OCI-LY7 (cell line): ENCODE measurements at regions of chr1 and their contacts with region 1.

Region 1: DNA sequence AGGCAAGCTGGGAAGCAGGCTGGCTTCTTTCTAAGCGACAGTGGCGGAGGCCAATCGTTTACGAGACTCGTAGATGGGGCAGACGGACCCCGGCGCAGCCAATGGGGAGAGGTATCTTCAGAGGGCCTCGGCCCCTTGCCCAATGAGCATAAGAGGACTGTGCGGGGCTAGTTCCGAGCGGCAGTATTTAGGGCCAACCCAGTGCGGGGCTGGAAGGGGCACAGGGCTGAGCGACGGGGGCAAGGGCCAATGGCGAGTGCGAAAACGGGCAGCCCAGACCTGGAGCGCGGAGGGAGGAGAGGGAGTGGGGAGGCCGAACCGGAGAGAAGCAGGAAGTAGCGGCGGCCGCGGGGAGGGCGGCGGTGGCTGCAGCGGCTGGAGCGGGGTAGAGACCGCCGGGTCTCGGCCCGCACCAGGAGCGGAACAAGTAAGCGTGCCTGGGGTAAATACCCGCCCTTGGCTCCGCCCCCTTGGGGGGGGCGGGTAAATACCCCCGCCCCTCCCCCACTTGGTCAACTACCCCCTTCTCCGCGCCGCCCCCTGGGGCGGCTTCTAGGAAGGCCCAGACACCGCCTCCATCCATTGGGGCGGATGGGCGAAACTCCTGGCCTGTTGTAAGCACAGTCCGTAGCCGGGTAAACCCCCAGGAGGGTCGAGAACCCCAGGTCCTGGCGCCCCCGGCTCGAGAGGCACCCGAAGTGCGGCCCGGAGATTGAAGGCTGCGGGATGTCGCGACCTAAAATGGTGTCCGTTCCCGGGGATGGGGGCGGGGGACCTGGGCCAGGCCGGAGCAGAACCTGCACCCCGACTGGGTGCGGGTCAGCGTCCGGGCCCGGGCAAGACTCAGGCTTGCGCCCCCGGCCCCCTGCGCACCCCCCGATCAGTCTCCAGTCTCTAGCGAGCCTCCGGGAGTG is at the start of gene ZNF687:
- DNase-seq: peak; percentile 100
- H3K4me3 ChIP-seq: peak within 1 kb of the TSS; percentile 80
- H3K27ac ChIP-seq: peak within 1 kb of the TSS; percentile 91
- H3K4me1 ChIP-seq: peaks cover 27% of the 10 kb centered on the region
- CTCF ChIP-seq: no peak
- total RNA-seq, gene ZNF687: 18.0 and 20.9 TPM in 2 replicates

Region 2: GRCh38 chr1:151198255-151199127 is 83.7 kb before region 1 on chr1 and contains the start of gene PIP5K1A:
- CTCF ChIA-PET with region 1: no interaction called
- POLR2A ChIA-PET with region 1: interaction called, 3 read pairs
- intact Hi-C with region 1: loop called (anchors 1 kb)
- DNase-seq: peak; percentile 99
- H3K4me3 ChIP-seq: peak within 1 kb of the TSS; percentile 98
- H3K27ac ChIP-seq: peak within 1 kb of the TSS; percentile 66
- H3K4me1 ChIP-seq: peaks cover 35% of the 10 kb centered on the region
- CTCF ChIP-seq: no peak
- total RNA-seq, gene PIP5K1A: 42.9 and 50.5 TPM in 2 replicates

Region 3: DNA sequence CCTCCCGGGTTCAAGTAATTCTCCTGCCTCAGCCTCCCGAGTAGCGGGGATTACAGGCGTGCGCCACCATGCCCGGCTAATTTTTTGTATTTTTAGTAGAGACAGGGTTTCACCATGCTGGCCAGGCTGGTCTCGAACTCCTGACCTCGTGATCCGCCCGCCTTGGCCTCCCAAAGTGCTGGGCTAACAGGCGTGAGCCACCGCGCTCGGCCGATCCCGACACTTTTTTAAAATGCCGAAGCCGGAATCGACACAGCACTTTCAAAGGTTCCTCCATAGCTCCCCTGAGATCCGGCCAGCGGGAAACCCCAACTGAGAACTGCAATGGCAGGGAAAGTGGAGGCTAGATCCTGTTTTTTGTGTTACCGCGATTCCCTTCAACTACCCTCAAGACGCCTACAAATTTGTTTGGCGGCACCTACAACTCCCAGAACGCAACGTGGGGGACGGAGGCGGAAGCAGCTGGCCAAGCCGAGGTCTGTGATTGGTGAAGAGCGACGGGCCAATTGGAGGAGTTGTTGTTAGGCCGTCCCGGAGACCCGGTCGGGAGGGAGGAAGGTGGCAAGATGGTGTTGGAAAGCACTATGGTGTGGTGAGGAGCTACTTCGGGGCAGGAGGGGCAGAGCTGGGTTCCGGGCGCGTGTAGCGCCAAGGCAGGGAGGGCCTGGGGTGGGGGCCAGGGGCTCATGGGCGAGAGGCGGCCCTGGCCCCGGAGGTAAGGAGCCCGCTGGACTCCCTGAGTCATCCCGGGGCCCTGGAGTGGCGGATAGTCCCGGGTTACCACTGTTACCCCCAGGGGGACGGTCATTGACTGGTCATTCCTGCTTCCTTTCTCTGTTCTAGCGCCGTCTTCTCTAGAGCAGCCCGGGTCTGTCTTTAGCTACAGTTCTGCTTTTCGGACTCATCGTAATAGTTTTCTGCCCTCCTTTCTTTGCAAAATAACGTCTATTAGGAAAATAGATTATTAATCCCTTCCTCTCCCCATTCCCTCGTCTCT is 27.7 kb before region 1 on chr1 and contains the start of gene PSMD4:
- CTCF ChIA-PET with region 1: no interaction called
- POLR2A ChIA-PET with region 1: interaction called, 7 read pairs
- intact Hi-C with region 1: loop called (anchors 1 kb)
- DNase-seq: peak; percentile 97
- H3K4me3 ChIP-seq: peak within 1 kb of the TSS; percentile 90
- H3K27ac ChIP-seq: peak within 1 kb of the TSS; percentile 45
- H3K4me1 ChIP-seq: peaks cover 4% of the 10 kb centered on the region
- CTCF ChIP-seq: no peak
- total RNA-seq, gene PSMD4: 118 and 134 TPM in 2 replicates

Region 4: DNA sequence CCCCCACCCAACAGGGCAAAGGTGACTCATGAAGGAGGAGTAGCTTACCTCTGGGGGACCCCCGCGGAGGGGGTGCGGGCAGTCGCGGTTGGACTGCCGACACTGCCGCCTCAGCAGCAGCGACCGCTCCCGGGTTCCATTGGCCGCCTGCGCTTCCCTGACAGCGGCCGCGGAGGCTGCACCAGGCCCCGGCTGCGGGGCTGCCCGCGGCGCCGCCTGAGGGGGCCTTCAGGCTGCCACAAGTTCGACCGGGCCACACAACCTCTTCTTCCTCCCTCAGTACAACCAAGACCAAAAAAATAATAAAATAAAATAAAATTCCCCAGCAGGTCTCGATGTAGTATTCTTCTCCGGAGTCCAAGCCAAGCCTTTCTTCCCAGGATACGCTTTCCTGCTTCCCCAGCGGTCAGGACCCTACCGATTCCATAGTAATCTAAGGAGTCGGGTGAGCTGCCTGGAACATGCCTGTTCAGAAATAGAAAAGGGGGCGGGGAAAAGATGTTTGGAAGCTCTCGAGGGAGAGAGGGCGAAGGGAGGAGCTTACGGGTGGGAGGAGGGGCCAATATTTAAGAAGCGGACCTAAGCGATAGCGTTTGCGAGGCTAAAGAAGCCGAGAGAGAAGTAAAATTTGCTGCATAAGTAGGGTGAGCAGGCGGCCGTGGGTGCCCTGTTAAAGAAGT is 45.1 kb after region 1 on chr1 and contains the start of gene PI4KB:
- CTCF ChIA-PET with region 1: no interaction called
- POLR2A ChIA-PET with region 1: interaction called, 7 read pairs
- intact Hi-C with region 1: loop called (anchors 5 kb)
- DNase-seq: peak; percentile 97
- H3K4me3 ChIP-seq: peak within 1 kb of the TSS; percentile 74
- H3K27ac ChIP-seq: peak within 1 kb of the TSS; percentile 67
- H3K4me1 ChIP-seq: peaks cover 23% of the 10 kb centered on the region
- CTCF ChIP-seq: no peak
- total RNA-seq, gene PI4KB: 36.9 and 38.0 TPM in 2 replicates

Region 5: GRCh38 chr1:151340870-151341754 is 58.9 kb after region 1 on chr1:
- CTCF ChIA-PET with region 1: interaction called, 4 read pairs
- POLR2A ChIA-PET with region 1: interaction called, 3 read pairs
- intact Hi-C with region 1: loop called (anchors 2 kb)
- DNase-seq: peak; percentile 89
- H3K4me3 ChIP-seq: no peak overlapping the region
- H3K27ac ChIP-seq: peak overlapping the region; percentile 49
- H3K4me1 ChIP-seq: peaks cover 22% of the 10 kb centered on the region
- CTCF ChIP-seq: peak; percentile 95

Region 6: DNA sequence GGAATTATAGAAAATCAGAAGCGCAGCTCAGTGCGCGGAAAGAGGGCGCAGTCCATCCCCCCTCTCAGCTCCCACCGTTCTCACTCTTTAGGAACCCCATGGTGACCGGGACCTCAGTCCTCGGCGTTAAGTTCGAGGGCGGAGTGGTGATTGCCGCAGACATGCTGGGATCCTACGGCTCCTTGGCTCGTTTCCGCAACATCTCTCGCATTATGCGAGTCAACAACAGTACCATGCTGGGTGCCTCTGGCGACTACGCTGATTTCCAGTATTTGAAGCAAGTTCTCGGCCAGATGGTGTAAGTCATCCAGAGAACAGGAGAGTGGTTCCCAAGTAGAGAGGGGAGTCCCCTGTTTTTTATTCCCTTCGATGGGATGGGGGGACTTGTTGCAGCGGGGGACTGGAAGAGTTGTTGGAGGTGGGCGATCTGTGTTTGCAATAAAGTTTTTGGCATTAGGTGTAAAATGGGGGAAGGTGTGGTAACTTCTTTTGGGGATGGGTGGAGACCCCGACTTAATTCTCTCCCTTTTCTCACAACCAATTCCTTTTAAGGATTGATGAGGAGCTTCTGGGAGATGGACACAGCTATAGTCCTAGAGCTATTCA is 117.8 kb after region 1 on chr1:
- CTCF ChIA-PET with region 1: no interaction called
- POLR2A ChIA-PET with region 1: interaction called, 5 read pairs
- intact Hi-C with region 1: loop called (anchors 1 kb)
- DNase-seq: peak; percentile 31
- H3K4me3 ChIP-seq: peak overlapping the region; percentile 92
- H3K27ac ChIP-seq: peak overlapping the region; percentile 42
- H3K4me1 ChIP-seq: peaks cover 10% of the 10 kb centered on the region
- CTCF ChIP-seq: no peak